ENCODE measurements at regions of chr1 and their contacts with region 1.

Region 1: GRCh38 chr1:206590025-206590758 is 22.1 kb downstream of the EIF2D start:
- DNase-seq: peak; percentile 65
- H3K4me3 Mint-ChIP-seq: peak overlapping the region; percentile 5
- H3K27ac Mint-ChIP-seq: peak overlapping the region; percentile 91
- H3K4me1 Mint-ChIP-seq: peaks cover 64% of the 10 kb centered on the region
- H3K27me3 Mint-ChIP-seq: no peaks in the 10 kb centered on the region

Region 2: GRCh38 chr1:206507284-206508129 is 82.7 kb before region 1 on chr1 and contains the start of gene RASSF5:
- CTCF ChIA-PET with region 1: interaction called, 10 read pairs
- DNase-seq: peak; percentile 90
- H3K4me3 Mint-ChIP-seq: peak within 1 kb of the TSS; percentile 72
- H3K27ac Mint-ChIP-seq: no peak within 1 kb of the TSS
- H3K4me1 Mint-ChIP-seq: peaks cover 32% of the 10 kb centered on the region
- H3K27me3 Mint-ChIP-seq: peaks cover 76% of the 10 kb centered on the region

Region 3: GRCh38 chr1:206606856-206607255 is 16.7 kb after region 1 on chr1:
- CTCF ChIA-PET with region 1: interaction called, 20 read pairs
- DNase-seq: peak; percentile 36
- H3K4me3 Mint-ChIP-seq: no peak overlapping the region
- H3K27ac Mint-ChIP-seq: no peak overlapping the region
- H3K4me1 Mint-ChIP-seq: peaks cover 28% of the 10 kb centered on the region
- H3K27me3 Mint-ChIP-seq: no peaks in the 10 kb centered on the region

Region 4: GRCh38 chr1:206674745-206675175 is 84.6 kb after region 1 on chr1:
- CTCF ChIA-PET with region 1: no interaction called
- DNase-seq: no peak
- H3K4me3 Mint-ChIP-seq: no peak overlapping the region
- H3K27ac Mint-ChIP-seq: no peak overlapping the region
- H3K4me1 Mint-ChIP-seq: peaks cover 2% of the 10 kb centered on the region
- H3K27me3 Mint-ChIP-seq: peaks cover 16% of the 10 kb centered on the region

Region 5: DNA sequence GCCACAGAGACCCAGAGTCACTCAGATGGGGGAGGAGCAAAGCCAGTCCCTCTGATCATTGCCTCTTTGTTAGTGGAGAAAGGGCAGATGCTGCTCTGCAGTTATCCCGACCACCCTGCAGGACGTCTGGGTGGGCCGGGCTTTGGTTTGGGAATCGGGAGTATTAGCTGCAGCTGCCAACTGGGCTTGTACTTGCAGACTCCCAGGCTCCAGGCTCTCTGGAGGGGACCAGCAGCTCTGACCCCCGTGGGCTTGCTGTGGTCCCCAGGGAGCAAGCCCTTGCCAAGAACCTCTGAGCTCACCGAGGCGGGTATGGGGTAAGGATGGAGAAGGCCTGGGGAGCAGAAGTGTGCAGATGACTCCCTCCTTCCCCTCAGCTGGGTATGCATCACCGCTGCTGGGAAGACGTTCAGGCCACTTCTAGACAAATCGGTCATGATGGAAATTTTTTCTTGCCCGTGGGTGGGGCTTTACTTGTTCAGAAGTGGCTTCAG is 116.2 kb after region 1 on chr1:
- CTCF ChIA-PET with region 1: no interaction called
- DNase-seq: no peak
- H3K4me3 Mint-ChIP-seq: no peak overlapping the region
- H3K27ac Mint-ChIP-seq: no peak overlapping the region
- H3K4me1 Mint-ChIP-seq: peaks cover 70% of the 10 kb centered on the region
- H3K27me3 Mint-ChIP-seq: no peaks in the 10 kb centered on the region

Region 6: DNA sequence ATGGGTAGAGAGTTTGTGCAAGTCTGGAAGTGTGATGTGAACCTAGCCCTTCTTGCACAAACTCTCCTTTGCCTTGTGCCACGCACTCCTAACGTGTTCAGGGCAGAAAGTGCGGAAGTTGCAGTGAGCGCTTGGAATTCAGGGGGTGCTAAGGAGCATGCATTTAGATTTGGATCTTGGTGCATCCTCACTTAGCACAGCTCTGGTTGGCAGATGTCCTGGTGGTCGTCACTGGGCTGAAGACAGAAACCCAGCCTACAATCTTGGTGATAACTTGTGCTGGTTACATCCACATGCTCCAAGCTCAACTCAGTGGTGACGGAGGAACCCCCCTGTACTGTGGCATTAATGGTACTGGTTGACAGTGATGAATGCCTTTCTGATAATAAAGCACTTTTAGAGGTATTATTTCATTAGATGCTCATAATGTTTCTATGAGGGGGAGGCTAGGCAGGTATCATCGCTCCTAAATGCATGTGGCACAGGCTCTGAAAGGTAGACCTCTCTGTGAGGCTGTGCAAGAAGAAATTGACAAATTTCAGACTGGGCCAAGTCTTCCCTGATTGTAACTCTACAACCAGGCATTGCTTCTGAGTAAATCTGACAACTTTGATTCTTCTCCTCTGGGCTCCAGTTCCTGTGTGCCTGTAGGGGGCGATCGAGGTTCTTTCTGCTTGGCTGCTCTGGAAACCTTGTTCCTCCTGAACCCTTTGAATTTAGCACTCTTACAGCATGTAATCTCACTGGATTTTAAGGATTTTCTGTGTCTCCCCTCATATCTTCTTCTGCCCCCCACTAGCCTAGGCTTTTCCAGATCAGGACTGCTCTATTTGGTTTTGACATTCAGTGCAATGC is 135.1 kb after region 1 on chr1:
- CTCF ChIA-PET with region 1: no interaction called
- DNase-seq: peak; percentile 80
- H3K4me3 Mint-ChIP-seq: no peak overlapping the region
- H3K27ac Mint-ChIP-seq: no peak overlapping the region
- H3K4me1 Mint-ChIP-seq: peaks cover 26% of the 10 kb centered on the region
- H3K27me3 Mint-ChIP-seq: no peaks in the 10 kb centered on the region

Measured in activated naive CD4-positive, alpha-beta T cell treated with anti-CD3 and anti-CD28 coated beads, Interleukin-2, amount 10 ng/mL, durations not matched to agents 7 days and 5 days (primary cell).